HCT116 (cell line): ENCODE measurements at regions of chr5 and their contacts with region 1.

Region 1: GRCh38 chr5:174045470-174046025 is at the start of gene NSG2:
- DNase-seq: peak; percentile 86
- ATAC-seq: peak; percentile 100
- H3K4me3 ChIP-seq: no peak within 1 kb of the TSS
- H3K27ac ChIP-seq: no peak within 1 kb of the TSS
- H3K4me1 ChIP-seq: no peaks in the 10 kb centered on the region
- H3K27me3 ChIP-seq: peaks cover 25% of the 10 kb centered on the region
- CTCF ChIP-seq: peak; percentile 81 to 98 (median 81)
- POLR2A ChIP-seq: no peak
- RAD21 ChIP-seq: peak; percentile 98
- total RNA-seq, gene NSG2: not detected

Region 2: DNA sequence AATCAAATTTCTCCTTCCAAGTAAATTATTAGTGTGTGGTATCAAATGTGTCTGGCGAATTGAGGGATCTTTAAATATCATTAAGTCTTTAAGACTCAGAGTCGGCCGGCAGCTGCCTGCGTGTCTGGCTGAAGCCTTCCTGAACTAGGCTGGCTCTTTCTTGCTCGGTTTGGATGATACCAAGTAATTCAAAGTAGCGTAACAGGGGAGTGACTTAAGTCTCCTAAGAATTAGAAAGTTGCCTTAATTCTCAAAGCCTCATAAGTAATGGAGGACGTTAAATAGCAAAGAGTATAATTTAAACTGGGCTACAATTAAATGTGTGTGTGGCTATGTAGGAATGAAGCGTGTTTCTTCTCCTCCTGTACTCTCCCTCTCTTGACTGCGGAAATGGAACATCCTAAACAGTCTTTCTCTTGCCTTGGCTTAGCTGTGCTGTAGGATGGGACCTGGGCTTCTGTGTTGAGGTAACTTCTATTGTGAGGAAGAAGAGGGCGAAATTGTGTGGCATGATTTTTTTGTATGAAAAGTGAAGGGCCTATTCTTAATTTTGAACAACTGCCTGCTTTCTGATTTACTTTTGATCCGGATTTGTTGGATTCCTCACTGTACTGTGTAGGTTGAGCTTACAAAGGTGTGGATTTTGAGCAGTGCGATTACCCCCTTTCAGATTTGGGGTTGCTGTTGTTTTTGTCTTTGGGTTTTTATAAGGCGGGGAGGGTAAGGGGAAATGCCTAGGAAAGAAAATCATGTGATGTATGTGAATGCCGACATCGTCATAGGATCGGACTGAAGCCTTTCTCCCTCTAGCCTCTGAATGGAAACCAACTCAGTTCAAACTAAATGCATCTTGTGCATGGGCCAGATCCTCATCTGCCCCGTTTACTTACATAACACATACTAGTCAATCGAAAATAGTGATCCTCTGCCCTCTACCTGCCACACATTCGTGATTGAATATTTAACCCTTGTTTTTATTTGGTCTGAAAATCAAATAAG is 127.5 kb before region 1 on chr5:
- CTCF ChIA-PET with region 1: no interaction called
- POLR2A ChIA-PET with region 1: no interaction called
- RAD21 ChIA-PET with region 1: no interaction called
- intact Hi-C with region 1: no loop called
- DNase-seq: peak; percentile 83
- ATAC-seq: peak; percentile 96
- H3K4me3 ChIP-seq: peak overlapping the region; percentile 53 to 59
- H3K27ac ChIP-seq: peak overlapping the region; percentile 30
- H3K4me1 ChIP-seq: peaks cover 3 to 24% of the 10 kb centered on the region in 2 experiments; a peak in 3 of 4 replicates
- H3K27me3 ChIP-seq: no peaks in the 10 kb centered on the region
- CTCF ChIP-seq: no peak
- POLR2A ChIP-seq: peak; percentile 96
- RAD21 ChIP-seq: peak; percentile 42; the same call in 1 of the 2 replicates

Region 3: DNA sequence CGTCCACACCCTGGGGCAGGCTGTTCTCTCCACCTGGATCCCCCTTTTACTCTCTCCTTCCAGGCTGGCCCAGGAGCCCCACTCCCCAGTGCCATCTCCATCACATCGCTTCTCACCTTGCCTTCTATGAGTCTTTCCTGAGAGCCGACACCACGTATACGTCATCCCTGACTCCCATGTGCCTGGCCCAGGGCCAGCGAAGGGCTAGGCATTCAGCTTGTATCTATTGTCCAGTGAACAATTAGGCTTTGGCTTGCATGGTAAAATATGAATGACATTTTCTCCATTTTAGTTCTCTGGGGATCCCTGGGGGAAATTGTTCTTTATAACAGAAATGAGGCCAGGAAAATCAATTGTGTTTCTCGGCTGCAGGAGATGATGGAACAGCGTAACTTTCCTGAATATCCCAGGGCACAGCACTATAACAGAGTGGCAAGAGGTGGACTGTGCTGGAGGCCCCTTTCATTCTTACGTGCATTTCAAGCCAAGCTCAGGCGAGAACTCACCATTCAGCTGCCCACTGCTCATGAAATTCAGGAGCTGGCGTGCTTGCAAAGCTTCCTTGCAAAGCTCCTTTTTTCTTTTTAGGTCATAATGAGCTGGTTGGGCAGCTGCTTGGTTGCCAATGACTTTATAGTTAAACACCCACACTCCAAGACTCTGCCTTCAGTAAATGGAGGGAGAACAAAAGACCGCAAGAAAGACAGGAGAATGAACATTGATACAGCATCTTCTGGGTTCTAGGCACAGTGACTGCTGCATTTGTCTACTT is 37.7 kb after region 1 on chr5:
- CTCF ChIA-PET with region 1: no interaction called
- POLR2A ChIA-PET with region 1: no interaction called
- RAD21 ChIA-PET with region 1: no interaction called
- intact Hi-C with region 1: no loop called
- DNase-seq: no peak
- ATAC-seq: no peak
- H3K4me3 ChIP-seq: no peak overlapping the region
- H3K27ac ChIP-seq: no peak overlapping the region
- H3K4me1 ChIP-seq: no peaks in the 10 kb centered on the region
- H3K27me3 ChIP-seq: peaks cover 32% of the 10 kb centered on the region
- CTCF ChIP-seq: no peak
- POLR2A ChIP-seq: no peak
- RAD21 ChIP-seq: no peak

Region 4: DNA sequence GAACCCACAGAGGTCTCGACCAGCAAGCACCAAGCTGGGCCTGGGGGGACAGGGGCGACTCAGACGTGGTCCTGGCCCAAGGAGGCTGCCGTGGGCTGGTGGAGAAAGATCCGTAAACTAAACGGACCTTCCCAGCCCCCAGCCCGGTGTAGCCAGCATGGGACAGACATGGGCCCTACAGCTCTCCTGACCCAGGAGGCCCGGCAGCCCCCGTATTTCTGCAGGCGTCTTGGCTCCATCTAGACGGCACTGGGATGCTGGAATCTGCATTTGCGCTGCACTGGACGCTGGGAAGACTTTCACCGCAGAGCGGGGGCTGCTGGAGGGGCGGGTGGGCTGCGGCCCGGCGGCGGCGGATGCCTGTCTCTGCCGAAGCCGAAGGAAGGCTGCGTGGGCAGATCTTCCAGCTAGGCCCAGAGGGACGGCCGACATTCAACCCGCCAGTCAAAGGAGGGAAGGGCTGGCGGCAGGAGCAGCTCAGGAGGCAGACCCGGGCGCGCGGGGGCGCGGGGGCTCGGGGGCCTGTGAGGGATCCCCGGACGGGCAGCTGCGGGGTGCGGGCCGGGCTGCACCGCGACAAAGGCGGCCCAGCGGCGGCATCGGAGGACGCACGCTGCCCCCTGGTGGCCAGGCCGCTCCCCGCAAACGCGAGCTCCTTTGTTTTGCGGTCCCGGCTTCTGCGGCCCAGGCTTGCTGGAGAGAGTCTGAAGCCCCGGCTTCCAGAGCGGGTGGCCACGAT is 266.2 kb after region 1 on chr5:
- CTCF ChIA-PET with region 1: interaction called, 165 read pairs
- POLR2A ChIA-PET with region 1: interaction called, 8 read pairs
- RAD21 ChIA-PET with region 1: interaction called, 18 to 30 read pairs
- intact Hi-C with region 1: loop called (anchors 1 kb)
- DNase-seq: no peak
- ATAC-seq: peak; percentile 92
- H3K4me3 ChIP-seq: no peak overlapping the region
- H3K27ac ChIP-seq: no peak overlapping the region
- H3K4me1 ChIP-seq: no peaks in the 10 kb centered on the region; a peak in 1 of 4 replicates
- H3K27me3 ChIP-seq: peaks cover 4% of the 10 kb centered on the region; the same call in 1 of the 2 replicates
- CTCF ChIP-seq: peak; percentile 64 to 73 (median 70)
- POLR2A ChIP-seq: no peak
- RAD21 ChIP-seq: peak; percentile 89

Region 5: DNA sequence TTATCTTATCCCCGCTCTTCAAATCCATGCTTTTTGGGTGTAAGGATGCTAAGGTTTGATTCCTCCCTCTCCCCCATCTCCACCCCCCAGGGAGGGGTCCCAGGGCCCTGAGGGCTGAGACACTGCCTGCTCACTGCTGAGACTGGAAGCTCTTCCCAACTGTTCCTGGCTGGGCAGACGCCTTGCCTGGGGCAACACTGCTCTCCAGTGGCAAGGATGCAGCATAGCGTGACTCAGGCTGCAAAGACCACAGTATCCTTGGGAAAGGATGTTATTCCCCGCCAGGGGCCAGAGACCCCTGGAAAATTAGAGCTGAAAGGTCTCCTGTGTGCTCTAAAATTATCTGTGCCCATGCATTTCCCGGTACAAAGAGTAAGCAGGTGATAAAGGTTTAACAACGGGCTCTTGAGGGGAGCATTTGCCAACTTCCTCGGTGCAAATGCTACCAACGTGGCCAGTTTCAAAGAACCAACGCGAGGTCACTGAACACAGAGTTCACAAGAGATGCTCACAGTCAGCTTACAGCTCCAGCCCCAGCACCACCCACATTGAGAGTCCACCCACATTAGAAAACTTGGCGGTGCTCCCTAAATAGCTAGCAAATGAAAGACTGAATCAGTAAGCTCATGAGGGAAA is 271.8 kb after region 1 on chr5:
- CTCF ChIA-PET with region 1: interaction called, 165 read pairs
- POLR2A ChIA-PET with region 1: interaction called, 8 read pairs
- RAD21 ChIA-PET with region 1: interaction called, 18 to 30 read pairs
- intact Hi-C with region 1: loop called (anchors 1 kb)
- DNase-seq: no peak
- ATAC-seq: peak; percentile 97
- H3K4me3 ChIP-seq: no peak overlapping the region
- H3K27ac ChIP-seq: no peak overlapping the region
- H3K4me1 ChIP-seq: no peaks in the 10 kb centered on the region
- H3K27me3 ChIP-seq: peaks cover 30% of the 10 kb centered on the region
- CTCF ChIP-seq: peak; percentile 79 to 94 (median 91)
- POLR2A ChIP-seq: no peak
- RAD21 ChIP-seq: peak; percentile 95

Region 6: GRCh38 chr5:174599992-174600391 is 554.4 kb after region 1 on chr5:
- CTCF ChIA-PET with region 1: no interaction called
- POLR2A ChIA-PET with region 1: no interaction called
- RAD21 ChIA-PET with region 1: no interaction called
- intact Hi-C with region 1: no loop called
- DNase-seq: no peak
- ATAC-seq: peak; percentile 88
- H3K4me3 ChIP-seq: peak overlapping the region; percentile 29 to 51
- H3K27ac ChIP-seq: no peak overlapping the region
- H3K4me1 ChIP-seq: peaks cover 26 to 37% of the 10 kb centered on the region in 2 experiments
- H3K27me3 ChIP-seq: no peaks in the 10 kb centered on the region
- CTCF ChIP-seq: 0 out of 6 replicates have a peak, but pooled peaks of 1 of the 3 experiments have one; percentile 21
- POLR2A ChIP-seq: no peak
- RAD21 ChIP-seq: no peak